ENCODE measurements at regions of chr19 and their contacts with region 1.

Region 1: GRCh38 chr19:56393119-56394012 is at the start of gene ZNF582:
- DNase-seq: peak; percentile 79 to 94 (median 90)
- ATAC-seq: peak; percentile 98
- H3K4me3 ChIP-seq: peak within 1 kb of the TSS; percentile 90
- H3K4me3 Mint-ChIP-seq: peak within 1 kb of the TSS; percentile 89 to 99 (median 98)
- H3K27ac ChIP-seq: peak within 1 kb of the TSS; percentile 92
- H3K27ac Mint-ChIP-seq: peak within 1 kb of the TSS; percentile 91 to 99 (median 96)
- H3K4me1 ChIP-seq: peaks cover 3 to 5% of the 10 kb centered on the region in 2 donors
- H3K4me1 Mint-ChIP-seq: peaks cover 3 to 32% (median 10%) of the 10 kb centered on the region in 7 donors
- H3K27me3 ChIP-seq: no peaks in the 10 kb centered on the region
- H3K27me3 Mint-ChIP-seq: no peaks in the 10 kb centered on the region
- total RNA-seq, gene ZNF582: 1.7 to 7.6 (median 3.3) TPM

Region 2: DNA sequence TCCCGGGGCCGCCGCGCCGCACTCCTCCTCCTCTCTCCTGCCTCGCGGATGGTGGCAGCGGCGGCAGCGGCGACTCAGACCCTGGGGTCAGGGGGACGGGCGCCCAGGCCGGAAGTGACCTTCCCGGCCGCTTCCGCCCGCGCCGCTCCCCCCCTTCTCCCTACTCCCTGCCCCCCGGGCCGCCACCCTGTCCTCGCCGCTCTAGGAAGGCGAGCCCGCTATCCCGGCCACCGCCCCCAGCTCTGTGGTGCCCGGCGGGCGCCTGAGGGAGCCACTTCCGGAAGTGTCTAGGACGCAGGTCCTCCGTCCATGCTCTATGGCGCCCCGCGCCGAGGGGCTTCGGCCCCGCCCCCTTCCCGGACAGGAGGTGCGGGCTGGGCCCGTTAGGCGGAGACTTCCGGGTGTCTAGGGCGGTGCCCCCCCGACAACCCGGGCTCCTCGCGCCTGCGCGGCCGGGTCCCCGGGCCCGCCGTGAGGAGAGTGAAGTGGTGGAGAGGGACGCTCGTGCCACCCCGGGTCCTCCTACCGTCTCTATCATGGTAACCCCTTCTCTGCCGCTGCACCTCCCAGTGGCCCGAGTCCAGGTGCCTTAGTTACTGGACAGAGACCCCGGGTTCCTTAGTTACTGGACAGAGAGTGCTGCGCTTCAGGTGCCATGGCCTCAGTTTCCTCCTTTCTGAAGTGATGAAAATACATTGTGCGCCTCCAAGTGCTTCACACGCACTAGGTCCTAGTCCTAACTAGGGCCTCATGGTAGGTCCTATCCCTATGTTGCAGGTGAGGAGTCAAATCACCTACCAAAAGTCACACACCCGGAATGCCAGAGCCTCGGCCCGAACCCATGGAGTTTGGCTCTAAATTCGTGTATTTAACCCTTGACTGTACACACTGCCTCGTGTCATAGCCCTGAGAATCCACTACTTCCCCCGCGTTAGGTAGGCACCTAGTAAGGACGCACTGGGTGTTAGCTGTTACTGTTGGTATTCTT is 271.9 kb before region 1 on chr19 and contains the start of gene ZNF787:
- CTCF ChIA-PET with region 1: no interaction called
- POLR2A ChIA-PET with region 1: no interaction called
- intact Hi-C with region 1: loop called in 1 of 2 experiments (anchors 1 kb)
- DNase-seq: peak; percentile 94 to 98 (median 98)
- ATAC-seq: peak; percentile 88
- H3K4me3 ChIP-seq: peak within 1 kb of the TSS; percentile 79
- H3K4me3 Mint-ChIP-seq: peak within 1 kb of the TSS; percentile 85 to 93 (median 88)
- H3K27ac ChIP-seq: peak within 1 kb of the TSS; percentile 97
- H3K27ac Mint-ChIP-seq: peak within 1 kb of the TSS; percentile 87 to 98 (median 95)
- H3K4me1 ChIP-seq: peaks cover 8 to 34% of the 10 kb centered on the region in 2 donors
- H3K4me1 Mint-ChIP-seq: peaks cover 17 to 72% (median 58%) of the 10 kb centered on the region in 7 donors
- H3K27me3 ChIP-seq: no peaks in the 10 kb centered on the region
- H3K27me3 Mint-ChIP-seq: no peaks in the 10 kb centered on the region
- total RNA-seq, gene ZNF787: 19.7 to 41.2 (median 33.0) TPM

Region 3: GRCh38 chr19:56294549-56294948 is 98.8 kb before region 1 on chr19:
- CTCF ChIA-PET with region 1: no interaction called
- POLR2A ChIA-PET with region 1: no interaction called
- intact Hi-C with region 1: no loop called
- DNase-seq: no peak
- ATAC-seq: no peak
- H3K4me3 ChIP-seq: no peak overlapping the region
- H3K4me3 Mint-ChIP-seq: no peak overlapping the region
- H3K27ac ChIP-seq: no peak overlapping the region
- H3K27ac Mint-ChIP-seq: no peak overlapping the region
- H3K4me1 ChIP-seq: no peaks in the 10 kb centered on the region
- H3K4me1 Mint-ChIP-seq: no peaks in the 10 kb centered on the region
- H3K27me3 ChIP-seq: no peaks in the 10 kb centered on the region
- H3K27me3 Mint-ChIP-seq: no peaks in the 10 kb centered on the region

Region 4: DNA sequence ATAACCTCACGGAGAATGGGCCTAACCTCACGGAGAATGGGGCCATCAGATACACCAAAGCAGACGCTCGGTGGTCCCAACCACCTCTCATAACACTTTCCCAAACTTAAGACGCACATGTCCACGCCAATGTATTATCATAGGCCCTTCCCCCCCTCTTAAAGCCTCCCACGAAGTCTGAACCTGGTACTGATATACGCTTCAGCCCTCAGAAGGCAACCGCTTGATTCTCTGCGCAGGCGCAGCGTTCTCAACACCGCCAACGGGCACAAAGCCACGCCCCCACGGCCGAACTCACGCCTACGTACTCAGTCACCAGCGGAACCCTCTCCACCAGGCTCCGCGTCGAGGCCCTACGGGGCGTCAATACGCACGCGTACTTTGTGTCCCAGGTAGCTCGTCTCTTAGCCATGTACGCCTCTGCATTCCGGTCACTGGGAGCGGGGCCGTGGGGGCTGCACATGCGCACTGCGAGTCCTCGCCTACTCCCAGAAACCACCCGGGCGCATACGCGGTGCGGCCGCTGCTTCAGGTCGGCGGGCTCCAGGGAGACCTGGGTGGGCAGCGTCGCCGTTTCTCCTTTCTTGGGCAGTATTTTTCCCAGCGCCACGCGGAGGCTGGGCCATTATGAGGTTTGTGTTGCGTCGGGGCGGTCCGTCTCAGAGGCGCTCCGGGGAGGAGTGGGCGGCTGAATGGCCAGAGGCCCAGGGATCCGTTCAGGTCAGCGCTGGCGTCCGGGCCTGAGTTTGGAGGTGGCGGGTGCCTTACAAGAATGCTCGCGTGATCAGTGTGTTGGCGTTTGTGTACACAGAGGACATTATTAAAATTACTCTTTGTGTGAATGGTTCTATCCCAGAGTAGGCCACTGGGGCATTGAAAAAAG is 25.3 kb before region 1 on chr19:
- CTCF ChIA-PET with region 1: no interaction called
- POLR2A ChIA-PET with region 1: interaction called, 8 read pairs
- intact Hi-C with region 1: loop called in 1 of 2 experiments (anchors 1 kb)
- DNase-seq: peak; percentile 65 to 85 (median 74)
- ATAC-seq: peak; percentile 96
- H3K4me3 ChIP-seq: peak overlapping the region; percentile 68
- H3K4me3 Mint-ChIP-seq: peak overlapping the region; percentile 87 to 98 (median 95)
- H3K27ac ChIP-seq: peak overlapping the region; percentile 70
- H3K27ac Mint-ChIP-seq: peak overlapping the region; percentile 63 to 95 (median 87)
- H3K4me1 ChIP-seq: peaks cover 0 to 9% of the 10 kb centered on the region in 2 donors
- H3K4me1 Mint-ChIP-seq: peaks cover 6 to 33% (median 26%) of the 10 kb centered on the region in 7 donors
- H3K27me3 ChIP-seq: no peaks in the 10 kb centered on the region
- H3K27me3 Mint-ChIP-seq: no peaks in the 10 kb centered on the region

Region 5: GRCh38 chr19:56538254-56538760 is 144.9 kb after region 1 on chr19:
- CTCF ChIA-PET with region 1: no interaction called
- POLR2A ChIA-PET with region 1: no interaction called
- intact Hi-C with region 1: loop called in 1 of 2 experiments (anchors 2 kb)
- DNase-seq: peak; percentile 84 to 94 (median 89)
- ATAC-seq: peak; percentile 94
- H3K4me3 ChIP-seq: peak overlapping the region; percentile 87
- H3K4me3 Mint-ChIP-seq: peak overlapping the region; percentile 88 to 95 (median 93)
- H3K27ac ChIP-seq: peak overlapping the region; percentile 83
- H3K27ac Mint-ChIP-seq: peak overlapping the region; percentile 90 to 97 (median 94)
- H3K4me1 ChIP-seq: peaks cover 5% of the 10 kb centered on the region in 2 donors
- H3K4me1 Mint-ChIP-seq: peaks cover 13 to 27% (median 21%) of the 10 kb centered on the region in 7 donors
- H3K27me3 ChIP-seq: no peaks in the 10 kb centered on the region
- H3K27me3 Mint-ChIP-seq: peaks cover 0 to 4% (median 0%) of the 10 kb centered on the region in 5 donors

Region 6: DNA sequence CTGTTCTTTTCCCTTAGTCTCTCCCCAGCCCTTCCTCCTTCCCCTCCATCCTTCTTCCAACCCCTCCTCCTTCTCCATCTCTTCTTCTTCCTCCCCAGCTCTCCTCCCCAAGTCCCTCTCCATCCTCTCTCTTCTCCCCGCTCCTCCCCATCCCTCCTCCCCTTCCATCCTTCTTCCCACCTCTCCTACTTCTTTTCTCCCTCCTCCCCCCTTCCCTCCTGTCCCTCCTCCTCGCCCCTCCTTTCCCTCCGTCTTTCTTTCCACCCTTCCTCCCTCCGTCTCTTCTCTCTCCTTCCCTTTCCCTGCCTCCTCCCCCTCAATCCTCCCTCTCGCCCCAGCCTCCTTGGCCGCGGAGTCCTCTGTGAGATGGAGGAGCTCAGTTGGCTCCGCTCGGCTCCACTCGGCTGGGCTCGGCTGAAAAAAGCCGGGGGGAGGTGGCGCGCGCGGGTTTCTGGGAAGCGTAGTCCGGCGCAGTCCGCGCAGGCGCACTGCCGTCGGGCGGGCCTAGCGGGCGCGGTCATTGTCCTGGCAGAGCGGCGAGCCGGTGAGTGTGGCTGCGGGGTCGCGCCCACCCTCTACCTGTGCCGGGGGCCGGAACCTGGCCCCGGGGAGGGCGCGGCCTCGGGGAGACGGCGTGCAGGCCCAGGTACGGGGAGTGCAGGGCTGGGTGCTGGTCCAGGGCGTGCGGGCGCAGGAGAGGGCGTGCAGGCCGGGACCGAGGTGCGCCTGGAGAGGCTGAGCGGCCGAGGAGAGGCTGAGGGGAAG is 201.6 kb after region 1 on chr19 and contains the start of gene ZNF71:
- CTCF ChIA-PET with region 1: no interaction called
- POLR2A ChIA-PET with region 1: no interaction called
- intact Hi-C with region 1: loop called in 1 of 2 experiments (anchors 2 kb)
- DNase-seq: peak; percentile 75 to 89 (median 81)
- ATAC-seq: peak; percentile 96
- H3K4me3 ChIP-seq: peak within 1 kb of the TSS; percentile 57
- H3K4me3 Mint-ChIP-seq: peak within 1 kb of the TSS; percentile 83 to 99 (median 90)
- H3K27ac ChIP-seq: peak within 1 kb of the TSS; percentile 71
- H3K27ac Mint-ChIP-seq: peak within 1 kb of the TSS; percentile 72 to 94 (median 86)
- H3K4me1 ChIP-seq: peaks cover 0 to 3% of the 10 kb centered on the region in 2 donors
- H3K4me1 Mint-ChIP-seq: peaks cover 19 to 30% (median 21%) of the 10 kb centered on the region in 7 donors
- H3K27me3 ChIP-seq: no peaks in the 10 kb centered on the region
- H3K27me3 Mint-ChIP-seq: no peaks in the 10 kb centered on the region
- total RNA-seq, gene ZNF71: 4.5 to 7.7 (median 6.6) TPM

Region 7: DNA sequence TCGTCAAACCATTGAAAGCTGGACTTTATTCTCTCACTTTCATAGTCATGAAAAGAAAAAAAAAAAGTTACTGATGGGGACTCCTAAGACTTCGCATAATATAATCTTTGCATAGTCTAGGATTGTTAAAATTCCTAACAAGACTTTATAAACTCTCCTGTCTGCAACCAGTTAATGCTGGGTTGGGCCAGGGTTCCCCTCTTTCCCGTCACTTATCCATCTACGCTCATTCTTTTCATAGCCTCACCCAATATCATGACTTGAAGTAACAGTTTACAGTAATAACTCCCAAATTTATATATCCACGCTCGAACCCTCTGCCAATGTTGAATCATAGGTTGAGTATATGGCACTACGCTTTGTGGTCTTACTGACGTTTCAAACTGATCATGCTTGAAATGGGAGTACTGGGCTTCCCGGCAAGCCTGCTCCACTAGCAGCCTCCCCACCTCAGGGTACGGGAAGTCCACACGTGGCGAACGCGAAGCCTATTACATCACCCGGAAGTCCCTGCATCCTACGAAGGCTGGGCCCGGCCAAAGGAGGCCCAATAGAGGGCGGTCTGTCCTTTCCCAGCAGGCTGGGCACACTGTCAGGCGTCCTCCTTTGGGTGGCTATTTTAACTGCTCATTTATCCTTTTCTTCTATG is 886.2 kb after region 1 on chr19:
- CTCF ChIA-PET with region 1: no interaction called
- POLR2A ChIA-PET with region 1: no interaction called
- intact Hi-C with region 1: loop called in 1 of 2 experiments (anchors 1 kb)
- DNase-seq: peak in 6 of 9 donors; percentile 60 to 81 (median 78)
- ATAC-seq: peak; percentile 85
- H3K4me3 ChIP-seq: peak overlapping the region; percentile 80
- H3K4me3 Mint-ChIP-seq: no peak overlapping the region
- H3K27ac ChIP-seq: peak overlapping the region; percentile 98
- H3K27ac Mint-ChIP-seq: peak overlapping the region in 2 of 9 donors; percentile 6 to 51
- H3K4me1 ChIP-seq: peaks cover 18 to 23% of the 10 kb centered on the region in 2 donors
- H3K4me1 Mint-ChIP-seq: peaks cover 7 to 33% (median 25%) of the 10 kb centered on the region in 7 donors
- H3K27me3 ChIP-seq: no peaks in the 10 kb centered on the region
- H3K27me3 Mint-ChIP-seq: no peaks in the 10 kb centered on the region